Activated CD4-positive, alpha-beta T cell treated with anti-CD3 and anti-CD28 coated beads for 36 hours (primary cell): ENCODE measurements at regions of chr6 and their contacts with region 1.

Region 1: DNA sequence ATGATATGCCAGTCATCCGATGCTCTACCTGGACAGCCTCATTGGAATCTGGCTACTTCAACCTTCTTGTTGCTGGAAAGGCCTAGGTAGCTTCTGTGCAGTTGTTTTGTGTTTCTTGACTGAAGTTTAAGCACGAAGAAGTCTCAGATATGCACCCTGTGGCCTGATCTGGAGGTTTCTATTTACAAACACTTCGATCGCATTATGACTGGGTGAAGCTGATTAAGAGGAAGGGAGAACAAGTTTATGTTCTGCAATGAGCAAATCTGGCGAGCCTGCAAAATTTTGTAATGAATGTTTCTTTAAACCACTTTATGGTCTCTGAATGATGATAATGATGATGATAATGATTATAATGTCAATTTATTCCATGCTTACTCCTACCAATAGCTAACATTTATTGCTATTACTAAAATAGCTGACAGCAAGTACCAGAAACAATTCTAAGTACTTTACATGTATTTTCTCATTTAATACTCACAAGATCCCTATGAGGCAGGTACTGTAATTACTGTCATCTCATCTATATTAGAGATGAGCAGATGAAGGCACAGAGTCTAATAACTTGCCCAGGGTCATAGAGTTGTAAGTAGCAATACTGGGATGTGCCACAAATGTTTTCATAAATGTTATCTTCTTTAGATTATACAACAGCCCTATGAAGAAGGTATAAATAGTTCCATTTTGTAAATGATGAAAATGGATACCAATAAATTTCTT is 126.1 kb upstream of the UST start:
- DNase-seq: peak; percentile 16
- ATAC-seq: peak; percentile 78
- H3K4me3 Mint-ChIP-seq: no peak overlapping the region
- H3K27ac Mint-ChIP-seq: no peak overlapping the region
- H3K4me1 Mint-ChIP-seq: no peaks in the 10 kb centered on the region
- H3K27me3 Mint-ChIP-seq: peaks cover 6% of the 10 kb centered on the region

Region 2: DNA sequence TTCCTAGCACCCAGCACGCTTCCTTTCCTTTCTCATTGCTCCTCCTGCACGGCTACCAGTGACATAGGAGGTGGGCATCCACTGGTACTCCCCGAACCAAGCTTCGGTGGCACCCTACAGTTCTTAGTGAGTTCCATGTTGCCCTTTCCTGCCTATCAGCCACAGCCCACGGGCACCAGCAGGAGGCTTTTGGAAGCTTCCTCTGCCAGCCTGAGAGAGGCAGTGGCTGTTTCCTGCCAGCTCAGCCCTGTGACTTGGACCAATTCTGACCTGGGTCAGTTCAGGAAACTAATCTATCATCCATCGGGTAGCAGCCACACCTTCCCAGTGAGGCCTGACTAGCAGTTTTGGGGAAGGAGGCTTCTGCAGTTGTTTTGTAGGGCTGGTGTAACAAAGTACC is 50.3 kb before region 1 on chr6:
- CTCF ChIA-PET with region 1: no interaction called
- POLR2A ChIA-PET with region 1: no interaction called
- intact Hi-C with region 1: no loop called
- DNase-seq: no peak
- ATAC-seq: no peak
- H3K4me3 Mint-ChIP-seq: no peak overlapping the region
- H3K27ac Mint-ChIP-seq: no peak overlapping the region
- H3K4me1 Mint-ChIP-seq: peaks cover 5% of the 10 kb centered on the region
- H3K27me3 Mint-ChIP-seq: peaks cover 22% of the 10 kb centered on the region

Region 3: DNA sequence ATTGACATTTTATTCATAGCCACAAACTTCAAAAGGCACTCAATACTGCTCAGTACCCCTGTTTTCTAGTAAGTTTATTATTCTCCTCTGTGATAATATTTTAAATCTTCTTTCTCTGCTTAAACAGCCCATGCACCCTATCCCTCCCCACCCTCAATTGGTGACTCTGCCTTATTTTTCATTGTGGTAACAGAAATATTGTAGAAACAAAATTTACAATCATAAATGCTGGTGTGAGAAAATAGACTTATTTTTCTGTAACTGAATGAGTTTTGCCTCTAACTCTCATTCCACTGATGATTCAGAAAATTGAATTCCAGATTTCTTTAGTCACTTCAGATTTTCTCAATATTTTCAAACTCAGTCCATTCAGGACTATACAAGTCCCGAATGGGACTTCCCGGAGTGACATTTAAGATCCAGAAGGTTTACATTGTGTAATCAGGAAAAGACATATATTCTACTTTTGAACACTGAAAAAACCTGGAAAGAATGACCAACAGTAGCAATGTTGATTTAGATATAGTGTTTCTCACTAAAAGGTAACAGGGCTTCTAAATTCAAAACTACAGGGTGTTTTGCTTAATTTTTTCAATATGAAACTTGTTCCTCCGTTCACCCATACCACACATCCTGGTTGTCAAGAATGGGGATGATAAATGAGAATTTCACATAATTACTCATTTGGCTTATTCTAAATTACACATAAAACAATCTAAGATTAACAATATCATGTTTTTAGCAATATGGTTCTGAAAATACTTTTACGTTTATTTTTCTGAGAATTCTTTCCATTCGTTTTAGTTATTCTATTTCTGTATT is 91.3 kb after region 1 on chr6:
- CTCF ChIA-PET with region 1: no interaction called
- POLR2A ChIA-PET with region 1: no interaction called
- intact Hi-C with region 1: loop called in 1 of 2 experiments (anchors 5 kb)
- DNase-seq: no peak
- ATAC-seq: peak; percentile 78
- H3K4me3 Mint-ChIP-seq: no peak overlapping the region
- H3K27ac Mint-ChIP-seq: no peak overlapping the region
- H3K4me1 Mint-ChIP-seq: peaks cover 8% of the 10 kb centered on the region
- H3K27me3 Mint-ChIP-seq: peaks cover 2% of the 10 kb centered on the region